Endothelial cell of umbilical vein (primary cell): ENCODE measurements at regions of chr14 and their contacts with region 1.

Region 1: GRCh38 chr14:20613094-20614037 is 22.2 kb upstream of the RNASE12 start:
- DNase-seq: peak; percentile 97
- H3K4me3 ChIP-seq: peak overlapping the region; percentile 48 to 86 (median 70)
- H3K27ac ChIP-seq: peak overlapping the region; percentile 27
- H3K4me1 ChIP-seq: peaks cover 11% of the 10 kb centered on the region
- H3K27me3 ChIP-seq: peaks cover 3 to 6% of the 10 kb centered on the region in 2 experiments
- CTCF ChIP-seq: peak; percentile 55 to 65
- POLR2A ChIP-seq: no peak

Region 2: GRCh38 chr14:20343092-20343861 is 270.1 kb before region 1 on chr14 and contains the start of gene PARP2:
- CTCF ChIA-PET with region 1: interaction called, 10 read pairs
- POLR2A ChIA-PET with region 1: interaction called, 8 read pairs
- dilution Hi-C with region 1: no loop called
- intact Hi-C with region 1: no loop called
- DNase-seq: peak; percentile 100
- H3K4me3 ChIP-seq: peak within 1 kb of the TSS; percentile 78 to 95 (median 78)
- H3K27ac ChIP-seq: peak within 1 kb of the TSS; percentile 85
- H3K4me1 ChIP-seq: peaks cover 11% of the 10 kb centered on the region
- H3K27me3 ChIP-seq: no peaks in the 10 kb centered on the region
- CTCF ChIP-seq: no peak
- POLR2A ChIP-seq: peak; percentile 100
- total RNA-seq, gene PARP2: 30.6 and 30.8 TPM in 2 replicates

Region 3: DNA sequence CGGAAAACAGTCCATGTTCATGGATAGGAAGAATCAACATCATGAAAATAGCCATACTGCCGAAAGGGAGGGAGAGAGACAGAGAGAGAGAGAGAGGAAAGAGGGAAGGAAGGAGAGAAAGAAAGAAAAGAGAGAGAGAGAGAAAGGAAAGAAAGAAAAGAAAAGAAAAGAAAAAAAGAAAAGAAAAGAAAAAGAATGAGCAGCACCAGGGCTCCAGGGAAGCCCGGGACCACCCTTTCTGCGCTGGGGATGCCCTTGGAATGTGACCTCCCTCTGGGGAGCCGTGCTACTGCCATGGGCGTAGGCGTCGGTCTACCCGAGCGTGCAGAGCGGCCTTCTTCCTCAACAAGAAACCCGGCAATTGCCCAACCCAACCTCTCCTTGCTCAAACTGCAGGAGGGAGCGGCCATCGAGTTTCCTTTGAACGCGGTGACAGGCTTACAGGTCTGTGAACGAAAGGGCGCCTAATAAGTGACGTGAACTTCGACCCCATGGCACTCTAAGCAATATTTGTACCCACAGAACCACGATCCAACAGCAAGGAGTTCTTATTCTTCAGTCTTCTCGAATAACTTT is 11.2 kb after region 1 on chr14:
- CTCF ChIA-PET with region 1: interaction called, 17 read pairs
- POLR2A ChIA-PET with region 1: no interaction called
- dilution Hi-C with region 1: no loop called
- intact Hi-C with region 1: loop called (anchors 1 kb)
- DNase-seq: no peak
- H3K4me3 ChIP-seq: peak overlapping the region; percentile 15 to 87 (median 64)
- H3K27ac ChIP-seq: no peak overlapping the region
- H3K4me1 ChIP-seq: peaks cover 14% of the 10 kb centered on the region
- H3K27me3 ChIP-seq: peaks cover 24 to 32% of the 10 kb centered on the region in 2 experiments
- CTCF ChIP-seq: no peak
- POLR2A ChIP-seq: no peak

Region 4: DNA sequence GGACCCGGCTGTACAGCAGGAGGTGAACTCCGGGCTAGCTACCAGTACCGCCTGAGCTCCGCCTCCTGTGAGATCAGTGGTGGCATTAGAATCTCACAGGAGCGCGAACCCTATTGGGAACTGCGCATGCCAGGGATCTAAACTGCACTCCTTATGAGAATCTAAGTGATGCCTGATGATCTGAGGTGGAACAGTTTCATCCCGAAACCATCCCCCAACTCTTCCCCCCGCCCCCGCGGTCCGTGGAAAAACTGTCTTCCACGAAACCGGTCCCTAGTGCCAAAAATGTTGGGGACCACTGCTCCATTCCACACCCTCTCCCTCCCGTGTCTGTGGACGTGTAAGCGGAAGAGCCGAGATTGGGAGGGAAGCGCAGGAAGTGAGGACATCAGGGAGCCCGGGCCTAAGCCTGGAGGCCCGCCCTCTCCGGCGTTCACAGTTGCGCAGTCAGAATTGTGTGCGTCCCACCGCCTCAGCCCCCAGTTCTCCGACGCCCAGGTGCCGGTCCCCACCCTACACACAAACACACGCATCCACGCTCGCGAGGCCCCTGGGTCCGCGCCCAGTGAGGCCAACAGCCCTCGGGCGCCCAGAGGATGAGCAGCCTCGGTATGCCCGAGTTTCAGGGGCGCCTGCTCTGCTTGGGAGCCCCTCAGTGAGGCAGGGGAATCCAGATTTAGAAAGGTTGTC is 69.2 kb after region 1 on chr14:
- CTCF ChIA-PET with region 1: interaction called, 49 read pairs
- POLR2A ChIA-PET with region 1: interaction called, 4 read pairs
- dilution Hi-C with region 1: no loop called
- intact Hi-C with region 1: loop called (anchors 1 kb)
- DNase-seq: peak; percentile 95
- H3K4me3 ChIP-seq: peak overlapping the region; percentile 40 to 84 (median 80)
- H3K27ac ChIP-seq: peak overlapping the region; percentile 97
- H3K4me1 ChIP-seq: peaks cover 27% of the 10 kb centered on the region
- H3K27me3 ChIP-seq: no peaks in the 10 kb centered on the region
- CTCF ChIP-seq: no peak
- POLR2A ChIP-seq: peak; percentile 89